Common myeloid progenitor, CD34-positive (primary cell): ENCODE measurements at regions of chr6 and their contacts with region 1.

Region 1: DNA sequence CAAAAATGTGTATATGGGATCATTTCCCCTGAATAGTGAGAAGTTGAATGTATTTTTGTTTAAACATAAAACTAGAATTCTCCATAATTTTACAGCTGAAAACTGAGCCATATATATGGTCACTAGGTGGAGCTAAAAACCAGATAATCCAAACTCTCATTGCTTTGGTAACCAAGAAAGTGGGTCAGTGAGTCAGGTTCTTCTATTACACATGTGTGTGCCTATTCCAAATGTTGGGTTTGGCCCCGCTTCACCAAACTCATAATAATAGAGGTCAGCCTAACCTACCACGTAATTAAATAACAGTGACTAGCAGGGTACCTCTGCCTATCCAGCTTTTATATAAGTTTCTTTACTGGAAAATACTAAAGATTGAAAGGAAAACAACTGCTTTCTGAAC is 19.3 kb upstream of the RNGTT start:
- DNase-seq: peak; percentile 69 to 83 (median 77)
- H3K4me3 ChIP-seq: peak overlapping the region in 1 of 7 experiments; percentile 14
- H3K27ac ChIP-seq: no peak overlapping the region
- H3K4me1 ChIP-seq: peaks cover 0 to 3% (median 1%) of the 10 kb centered on the region in 4 experiments
- H3K27me3 ChIP-seq: no peaks in the 10 kb centered on the region

Region 2: GRCh38 chr6:89073014-89073620 is 90.4 kb after region 1 on chr6:
- CTCF ChIA-PET with region 1: interaction called, 45 read pairs
- POLR2A ChIA-PET with region 1: no interaction called
- DNase-seq: peak; percentile 65 to 98 (median 94)
- H3K4me3 ChIP-seq: peak overlapping the region in 5 of 7 experiments; percentile 6 to 55 (median 26)
- H3K27ac ChIP-seq: peak overlapping the region; percentile 68 to 83
- H3K4me1 ChIP-seq: peaks cover 4 to 26% (median 23%) of the 10 kb centered on the region in 4 experiments
- H3K27me3 ChIP-seq: no peaks in the 10 kb centered on the region

Region 3: DNA sequence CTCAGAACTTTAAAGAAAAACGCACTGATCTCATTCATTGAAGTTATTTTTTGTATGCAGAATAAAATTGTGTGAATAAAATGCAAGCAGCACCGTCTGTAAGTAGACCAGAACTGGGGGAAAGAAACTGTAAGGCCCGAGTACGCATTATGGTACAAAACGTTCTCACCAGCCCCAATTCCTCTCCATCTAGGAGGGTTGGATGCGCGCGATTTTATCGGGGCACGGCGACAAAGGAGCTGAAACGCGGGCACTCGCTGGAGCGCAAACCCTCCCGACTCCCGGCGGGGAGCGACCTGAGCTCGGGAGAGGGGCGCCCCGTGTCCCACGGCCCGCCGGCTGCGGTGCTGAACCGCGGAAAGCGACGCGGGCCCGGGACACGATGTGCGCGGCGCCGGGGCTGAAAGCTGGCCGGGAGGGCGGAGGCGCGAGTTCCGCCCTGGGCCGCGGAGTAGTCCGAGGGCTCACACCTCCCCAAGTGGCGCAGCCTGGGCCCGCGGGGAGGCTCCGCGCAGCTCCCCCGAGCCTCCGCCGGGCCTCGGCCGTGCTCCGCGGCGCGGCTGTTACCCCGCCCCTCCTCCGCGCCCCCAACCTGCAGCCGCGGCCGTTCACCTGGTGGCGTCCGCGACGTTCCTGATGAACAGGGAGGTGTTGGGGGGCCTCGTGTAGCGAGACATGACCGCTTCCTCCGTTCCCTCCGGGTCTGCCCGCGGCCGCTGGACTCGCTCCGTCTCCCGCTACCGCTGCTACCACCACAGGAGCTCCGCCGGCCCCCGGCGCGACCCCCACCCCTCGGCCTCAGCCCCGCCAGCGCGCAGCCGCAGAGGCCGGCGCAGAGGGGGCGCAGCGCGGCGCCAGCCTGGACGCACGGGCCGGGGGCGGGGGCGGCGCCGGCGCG is 134.7 kb after region 1 on chr6 and contains the start of gene SRSF12:
- CTCF ChIA-PET with region 1: interaction called, 13 read pairs
- POLR2A ChIA-PET with region 1: no interaction called
- DNase-seq: peak; percentile 43 to 74 (median 59)
- H3K4me3 ChIP-seq: peak within 1 kb of the TSS; percentile 56 to 86 (median 77)
- H3K27ac ChIP-seq: no peak within 1 kb of the TSS
- H3K4me1 ChIP-seq: peaks cover 0 to 13% (median 10%) of the 10 kb centered on the region in 4 experiments
- H3K27me3 ChIP-seq: no peaks in the 10 kb centered on the region

Region 4: GRCh38 chr6:89145787-89146646 is 163.3 kb after region 1 on chr6 and contains the start of gene PM20D2:
- CTCF ChIA-PET with region 1: interaction called, 21 read pairs
- POLR2A ChIA-PET with region 1: no interaction called
- DNase-seq: peak; percentile 56 to 85 (median 77)
- H3K4me3 ChIP-seq: peak within 1 kb of the TSS; percentile 68 to 96 (median 82)
- H3K27ac ChIP-seq: peak within 1 kb of the TSS; percentile 17 to 72
- H3K4me1 ChIP-seq: peaks cover 2 to 38% (median 25%) of the 10 kb centered on the region in 4 experiments
- H3K27me3 ChIP-seq: no peaks in the 10 kb centered on the region